CD8-positive, alpha-beta memory T cell (primary cell): ENCODE measurements at regions of chr14 and their contacts with region 1.

Region 1: DNA sequence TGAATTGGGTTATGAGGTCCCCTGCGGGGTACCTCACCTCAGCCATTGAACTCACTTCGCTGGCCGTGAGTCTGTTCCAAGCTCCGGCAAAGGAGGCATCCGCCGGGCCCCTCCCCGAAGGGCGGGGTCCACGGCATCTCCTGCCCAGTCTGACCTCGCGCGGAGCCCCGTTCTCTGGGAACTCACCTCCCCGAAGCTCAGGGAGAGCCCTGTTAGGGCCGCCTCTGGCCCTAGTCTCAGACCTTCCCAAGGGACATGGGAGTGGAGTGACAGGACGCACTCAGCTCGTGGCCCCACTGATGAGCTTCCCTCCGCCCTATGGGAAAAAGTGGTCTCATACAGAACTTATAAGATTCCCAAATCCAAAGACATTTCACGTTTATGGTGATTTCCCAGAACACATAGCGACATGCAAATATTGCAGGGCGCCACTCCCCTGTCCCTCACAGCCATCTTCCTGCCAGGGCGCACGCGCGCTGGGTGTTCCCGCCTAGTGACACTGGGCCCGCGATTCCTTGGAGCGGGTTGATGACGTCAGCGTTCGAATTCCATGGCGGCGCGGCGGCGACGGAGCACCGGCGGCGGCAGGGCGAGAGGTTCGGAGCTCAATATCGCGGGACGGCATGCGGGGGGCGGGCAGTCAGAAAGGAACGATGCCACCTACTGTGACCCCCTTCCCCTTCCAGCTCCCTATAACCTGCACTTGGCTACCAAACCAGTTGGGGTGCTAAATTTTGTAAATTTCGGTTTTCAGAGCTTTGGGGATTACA is at the start of gene PARP2:
- DNase-seq: peak; percentile 85 to 95 (median 93)
- H3K4me3 ChIP-seq: peak within 1 kb of the TSS; percentile 95
- H3K4me3 Mint-ChIP-seq: peak within 1 kb of the TSS; percentile 90 to 99 (median 98)
- H3K27ac ChIP-seq: peak within 1 kb of the TSS; percentile 87
- H3K27ac Mint-ChIP-seq: peak within 1 kb of the TSS; percentile 93 to 99 (median 98)
- H3K4me1 ChIP-seq: peaks cover 7% of the 10 kb centered on the region
- H3K4me1 Mint-ChIP-seq: peaks cover 15 to 27% (median 21%) of the 10 kb centered on the region in 3 donors
- H3K27me3 ChIP-seq: no peaks in the 10 kb centered on the region
- H3K27me3 Mint-ChIP-seq: peaks cover 0 to 7% of the 10 kb centered on the region in 2 donors
- total RNA-seq, gene PARP2: 35.0 to 41.3 TPM

Region 2: DNA sequence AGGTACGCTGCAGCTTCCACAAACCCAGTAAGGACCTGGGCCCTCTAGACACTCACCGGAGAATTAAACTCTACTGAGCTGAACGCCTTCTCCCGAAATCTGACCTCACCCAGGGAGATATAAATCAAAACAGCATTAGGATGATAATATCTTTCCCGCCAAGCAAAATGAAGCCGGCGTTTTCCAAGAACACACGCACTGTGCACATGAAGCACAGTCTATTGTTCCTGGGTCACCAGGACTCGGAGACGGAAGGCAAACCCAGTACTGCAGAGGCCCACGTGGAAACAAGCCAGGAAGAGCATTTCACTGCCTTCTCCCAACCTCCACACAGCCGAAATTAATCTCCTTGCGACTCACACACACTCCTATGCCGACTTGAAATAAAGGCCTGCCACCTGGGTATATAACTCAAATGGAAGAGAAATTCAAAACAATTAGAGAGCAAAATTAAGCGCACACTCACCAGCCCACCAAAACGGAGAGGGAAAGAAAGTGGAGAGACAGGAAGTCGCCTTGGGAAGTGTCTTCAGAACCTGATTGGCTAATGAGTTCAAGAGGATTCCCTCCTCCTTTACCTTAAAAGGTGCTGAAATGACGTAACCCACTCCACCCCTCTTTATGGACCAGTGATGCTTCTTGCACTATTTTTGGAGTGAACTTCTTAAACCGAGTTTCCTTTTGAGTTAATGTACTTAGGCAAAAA is 10.3 kb before region 1 on chr14 and contains the start of gene CCNB1IP1:
- CTCF ChIA-PET with region 1: interaction called, 72 read pairs
- POLR2A ChIA-PET with region 1: interaction called, 37 read pairs
- DNase-seq: peak; percentile 10 to 78 (median 69)
- H3K4me3 ChIP-seq: peak within 1 kb of the TSS; percentile 88
- H3K4me3 Mint-ChIP-seq: peak within 1 kb of the TSS; percentile 99 to 100 (median 99)
- H3K27ac ChIP-seq: peak within 1 kb of the TSS; percentile 76
- H3K27ac Mint-ChIP-seq: peak within 1 kb of the TSS; percentile 83 to 98 (median 96)
- H3K4me1 ChIP-seq: peaks cover 16% of the 10 kb centered on the region
- H3K4me1 Mint-ChIP-seq: peaks cover 27 to 45% (median 31%) of the 10 kb centered on the region in 3 donors
- H3K27me3 ChIP-seq: no peaks in the 10 kb centered on the region
- H3K27me3 Mint-ChIP-seq: no peaks in the 10 kb centered on the region
- total RNA-seq, gene CCNB1IP1: 43.6 to 50.5 TPM

Region 3: GRCh38 chr14:20356422-20356821 is 13.1 kb after region 1 on chr14:
- CTCF ChIA-PET with region 1: interaction called, 15 read pairs
- POLR2A ChIA-PET with region 1: no interaction called
- DNase-seq: no peak
- H3K4me3 ChIP-seq: no peak overlapping the region
- H3K4me3 Mint-ChIP-seq: no peak overlapping the region
- H3K27ac ChIP-seq: no peak overlapping the region
- H3K27ac Mint-ChIP-seq: peak overlapping the region in 2 of 8 donors; percentile 11 to 82
- H3K4me1 ChIP-seq: no peaks in the 10 kb centered on the region
- H3K4me1 Mint-ChIP-seq: peaks cover 0 to 11% (median 0%) of the 10 kb centered on the region in 3 donors
- H3K27me3 ChIP-seq: no peaks in the 10 kb centered on the region
- H3K27me3 Mint-ChIP-seq: no peaks in the 10 kb centered on the region

Region 4: DNA sequence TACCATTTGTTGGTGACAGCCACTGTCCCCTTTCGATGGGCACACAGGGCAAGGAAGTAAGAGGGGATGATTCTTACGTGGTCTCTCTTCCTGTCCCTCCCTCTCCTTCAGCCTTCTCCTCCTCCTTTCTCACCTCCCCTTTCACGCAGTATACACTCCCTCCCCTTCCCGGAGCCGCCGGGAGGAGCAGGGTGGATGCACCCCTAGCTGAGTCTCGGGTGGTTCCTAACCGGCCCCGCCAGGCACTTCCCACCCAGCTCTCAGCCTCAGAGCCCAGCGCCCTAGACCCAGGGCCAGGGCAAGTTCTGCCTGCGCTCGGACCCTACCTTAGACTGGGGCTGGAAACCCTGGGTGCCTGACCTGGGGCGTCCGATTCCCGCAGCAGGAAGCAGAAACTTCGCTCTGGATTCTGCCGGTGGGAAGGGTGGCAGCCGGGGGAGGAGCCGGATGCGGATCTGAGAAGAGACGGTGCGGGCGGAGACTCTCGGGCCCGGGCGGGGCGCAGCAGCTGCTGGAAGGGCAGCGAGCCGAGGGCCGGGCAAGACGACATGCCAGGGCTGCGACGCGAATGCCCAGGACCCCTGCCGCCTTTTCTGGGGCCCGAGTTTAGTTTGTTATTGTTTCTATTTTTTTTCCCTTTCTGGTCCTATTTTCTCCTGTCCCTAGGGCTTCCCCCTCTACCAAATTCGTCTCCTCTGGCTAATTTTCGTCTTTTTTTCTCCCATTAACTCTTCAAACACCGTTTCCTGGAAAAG is 69.9 kb after region 1 on chr14 and contains the start of gene TEP1:
- CTCF ChIA-PET with region 1: interaction called, 24 read pairs
- POLR2A ChIA-PET with region 1: interaction called, 7 read pairs
- DNase-seq: peak; percentile 67 to 80 (median 69)
- H3K4me3 ChIP-seq: peak within 1 kb of the TSS; percentile 91
- H3K4me3 Mint-ChIP-seq: peak within 1 kb of the TSS; percentile 92 to 99 (median 96)
- H3K27ac ChIP-seq: peak within 1 kb of the TSS; percentile 90
- H3K27ac Mint-ChIP-seq: peak within 1 kb of the TSS; percentile 92 to 100 (median 98)
- H3K4me1 ChIP-seq: peaks cover 23% of the 10 kb centered on the region
- H3K4me1 Mint-ChIP-seq: peaks cover 39 to 57% (median 57%) of the 10 kb centered on the region in 3 donors
- H3K27me3 ChIP-seq: no peaks in the 10 kb centered on the region
- H3K27me3 Mint-ChIP-seq: no peaks in the 10 kb centered on the region
- total RNA-seq, gene TEP1: 31.7 to 33.0 TPM

Region 5: DNA sequence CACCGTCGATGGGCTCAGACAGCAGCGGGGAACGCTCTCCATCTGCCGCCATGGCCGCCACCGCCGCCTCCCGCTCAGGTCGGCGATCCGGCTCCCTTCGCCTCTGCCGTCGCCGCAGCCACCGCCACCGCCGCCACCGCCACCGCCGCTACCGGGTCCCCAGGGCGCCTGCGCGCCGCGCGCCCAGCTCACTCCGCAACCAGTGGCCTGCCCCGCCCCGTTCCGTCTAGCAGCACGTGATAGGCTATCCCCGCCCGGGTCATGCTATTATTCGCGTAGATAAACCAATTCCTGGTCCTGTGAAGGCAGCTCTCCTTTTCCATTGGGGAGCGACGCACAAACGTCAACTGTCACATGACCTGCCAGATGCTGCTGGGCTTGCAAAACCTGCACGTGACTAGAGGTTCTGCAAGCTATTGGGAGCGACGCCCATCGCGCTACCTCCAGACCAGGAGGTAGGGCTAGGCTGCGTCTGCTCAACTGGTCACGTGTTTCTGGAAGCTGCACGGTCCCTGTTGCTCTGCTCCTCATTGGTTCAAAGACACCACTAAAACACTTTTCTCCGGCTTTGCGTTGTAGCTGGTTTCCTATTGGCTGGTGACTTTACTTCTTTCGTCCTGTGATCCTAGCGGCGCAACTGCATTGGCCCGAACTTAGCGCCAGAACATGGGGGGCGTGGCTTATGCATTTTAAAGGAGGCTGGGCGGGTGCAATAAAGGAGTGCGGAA is 118.2 kb after region 1 on chr14 and contains the start of gene PIP4P1:
- CTCF ChIA-PET with region 1: interaction called, 7 read pairs
- POLR2A ChIA-PET with region 1: interaction called, 12 read pairs
- DNase-seq: peak; percentile 98 to 99 (median 99)
- H3K4me3 ChIP-seq: peak within 1 kb of the TSS; percentile 78
- H3K4me3 Mint-ChIP-seq: peak within 1 kb of the TSS; percentile 86 to 95 (median 89)
- H3K27ac ChIP-seq: peak within 1 kb of the TSS; percentile 75
- H3K27ac Mint-ChIP-seq: peak within 1 kb of the TSS; percentile 91 to 98 (median 96)
- H3K4me1 ChIP-seq: peaks cover 28% of the 10 kb centered on the region
- H3K4me1 Mint-ChIP-seq: peaks cover 29 to 41% (median 34%) of the 10 kb centered on the region in 3 donors
- H3K27me3 ChIP-seq: no peaks in the 10 kb centered on the region
- H3K27me3 Mint-ChIP-seq: peaks cover 0 to 6% of the 10 kb centered on the region in 2 donors
- total RNA-seq, gene PIP4P1: 29.5 to 33.5 TPM

Region 6: DNA sequence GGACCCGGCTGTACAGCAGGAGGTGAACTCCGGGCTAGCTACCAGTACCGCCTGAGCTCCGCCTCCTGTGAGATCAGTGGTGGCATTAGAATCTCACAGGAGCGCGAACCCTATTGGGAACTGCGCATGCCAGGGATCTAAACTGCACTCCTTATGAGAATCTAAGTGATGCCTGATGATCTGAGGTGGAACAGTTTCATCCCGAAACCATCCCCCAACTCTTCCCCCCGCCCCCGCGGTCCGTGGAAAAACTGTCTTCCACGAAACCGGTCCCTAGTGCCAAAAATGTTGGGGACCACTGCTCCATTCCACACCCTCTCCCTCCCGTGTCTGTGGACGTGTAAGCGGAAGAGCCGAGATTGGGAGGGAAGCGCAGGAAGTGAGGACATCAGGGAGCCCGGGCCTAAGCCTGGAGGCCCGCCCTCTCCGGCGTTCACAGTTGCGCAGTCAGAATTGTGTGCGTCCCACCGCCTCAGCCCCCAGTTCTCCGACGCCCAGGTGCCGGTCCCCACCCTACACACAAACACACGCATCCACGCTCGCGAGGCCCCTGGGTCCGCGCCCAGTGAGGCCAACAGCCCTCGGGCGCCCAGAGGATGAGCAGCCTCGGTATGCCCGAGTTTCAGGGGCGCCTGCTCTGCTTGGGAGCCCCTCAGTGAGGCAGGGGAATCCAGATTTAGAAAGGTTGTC is 339.3 kb after region 1 on chr14:
- CTCF ChIA-PET with region 1: interaction called, 14 read pairs
- POLR2A ChIA-PET with region 1: interaction called, 20 read pairs
- DNase-seq: peak; percentile 70 to 89 (median 81)
- H3K4me3 ChIP-seq: peak overlapping the region; percentile 97
- H3K4me3 Mint-ChIP-seq: no peak overlapping the region
- H3K27ac ChIP-seq: peak overlapping the region; percentile 96
- H3K27ac Mint-ChIP-seq: no peak overlapping the region
- H3K4me1 ChIP-seq: peaks cover 25% of the 10 kb centered on the region
- H3K4me1 Mint-ChIP-seq: peaks cover 6 to 10% (median 9%) of the 10 kb centered on the region in 3 donors
- H3K27me3 ChIP-seq: no peaks in the 10 kb centered on the region
- H3K27me3 Mint-ChIP-seq: peaks cover 0 to 4% of the 10 kb centered on the region in 2 donors